Calu3 (cell line): ENCODE measurements at regions of chr15 and their contacts with region 1.

Region 1: DNA sequence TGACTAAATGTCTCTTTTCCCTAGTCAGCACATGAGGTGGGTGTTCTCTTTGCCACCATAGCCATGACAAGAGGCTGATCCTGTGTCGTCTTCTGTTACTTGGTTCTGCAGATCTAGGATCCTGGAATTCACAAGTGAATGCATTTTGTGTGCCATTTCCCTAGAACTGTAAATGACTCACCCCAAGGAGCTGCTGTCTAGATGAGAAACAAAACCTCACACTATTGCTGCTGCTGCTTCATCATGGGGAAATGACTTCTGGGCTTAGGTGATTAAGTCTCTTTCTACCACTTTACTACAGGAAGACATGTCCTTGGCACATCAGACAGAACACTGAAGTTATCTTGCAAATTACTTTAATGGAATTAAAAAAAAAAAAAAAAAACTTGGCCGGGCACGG is 54.9 kb downstream of the SLCO3A1 start:
- DNase-seq: no peak
- H3K4me3 Mint-ChIP-seq: no peak overlapping the region
- H3K27ac Mint-ChIP-seq: no peak overlapping the region
- H3K4me1 Mint-ChIP-seq: peaks cover 30% of the 10 kb centered on the region
- H3K27me3 Mint-ChIP-seq: no peaks in the 10 kb centered on the region
- CTCF ChIP-seq: no peak

Region 2: DNA sequence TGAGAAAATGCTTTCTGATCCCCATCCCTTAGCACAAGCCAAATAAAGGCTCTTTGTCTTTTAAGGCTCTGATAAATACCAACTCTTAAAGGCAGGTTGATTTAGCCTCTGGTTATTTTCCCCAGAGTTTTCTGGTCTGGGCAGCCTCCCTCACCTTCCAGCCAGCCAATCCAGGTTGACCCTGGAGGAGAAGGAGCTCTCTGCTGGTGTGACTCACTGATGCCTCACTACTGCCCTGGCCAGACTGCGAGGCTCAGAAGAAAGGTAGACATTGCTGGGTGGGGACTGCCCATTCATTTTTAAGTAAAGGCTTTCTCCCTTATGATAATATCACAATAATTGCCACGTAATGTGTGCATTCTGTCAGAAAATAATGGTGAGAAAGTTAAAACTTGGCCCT is 17.8 kb before region 1 on chr15:
- CTCF ChIA-PET with region 1: interaction called, 10 read pairs
- intact Hi-C with region 1: no loop called
- DNase-seq: peak; percentile 78
- H3K4me3 Mint-ChIP-seq: no peak overlapping the region
- H3K27ac Mint-ChIP-seq: peak overlapping the region; percentile 67
- H3K4me1 Mint-ChIP-seq: peaks cover 60% of the 10 kb centered on the region
- H3K27me3 Mint-ChIP-seq: no peaks in the 10 kb centered on the region
- CTCF ChIP-seq: no peak

Region 3: GRCh38 chr15:91926908-91927270 is 18.5 kb after region 1 on chr15:
- CTCF ChIA-PET with region 1: interaction called, 16 read pairs
- intact Hi-C with region 1: no loop called
- DNase-seq: no peak
- H3K4me3 Mint-ChIP-seq: no peak overlapping the region
- H3K27ac Mint-ChIP-seq: no peak overlapping the region
- H3K4me1 Mint-ChIP-seq: peaks cover 46% of the 10 kb centered on the region
- H3K27me3 Mint-ChIP-seq: no peaks in the 10 kb centered on the region
- CTCF ChIP-seq: no peak